Activated naive CD4-positive, alpha-beta T cell treated with anti-CD3 and anti-CD28 coated beads, Interleukin-2, amount 10 ng/mL, durations not matched to agents 7 days and 5 days (primary cell): ENCODE measurements at regions of chr16 and their contacts with region 1.

Region 1: DNA sequence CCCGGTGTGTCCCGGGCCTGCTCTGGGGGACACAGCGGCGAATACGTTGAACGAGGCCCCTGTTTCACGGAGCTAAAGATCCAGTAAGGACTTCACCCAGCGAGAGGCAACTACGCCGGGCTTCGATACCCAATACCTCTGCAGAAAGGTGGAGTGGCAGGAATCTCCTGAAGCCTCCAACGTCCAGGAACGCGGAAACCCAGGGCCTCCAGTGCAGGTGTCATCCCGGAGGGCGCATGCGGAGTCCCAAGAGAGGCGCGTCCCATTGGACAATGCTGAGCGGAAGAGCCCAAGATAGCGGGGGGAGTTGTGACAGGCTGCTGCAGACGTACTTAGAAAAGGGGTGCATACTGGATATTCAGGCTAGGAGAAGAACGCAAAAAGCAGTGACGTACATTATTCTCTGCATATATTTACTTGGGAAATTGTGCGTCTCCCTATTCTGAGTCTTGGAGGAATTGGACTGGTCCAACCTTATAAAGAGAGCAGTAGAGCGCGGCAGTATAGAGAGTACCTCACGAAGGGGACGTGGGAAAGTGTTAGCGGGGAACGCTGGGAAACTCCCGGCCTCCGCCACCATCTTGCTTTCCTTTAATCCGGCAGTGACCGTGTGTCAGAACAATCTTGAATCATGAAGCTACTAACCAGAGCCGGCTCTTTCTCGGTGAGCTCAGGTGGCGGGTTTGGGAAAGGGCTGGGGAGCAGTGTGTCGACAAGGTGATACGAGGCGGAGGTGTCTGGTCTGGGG is at the start of gene UQCRC2:
- DNase-seq: peak; percentile 91
- H3K4me3 Mint-ChIP-seq: peak within 1 kb of the TSS; percentile 99
- H3K27ac Mint-ChIP-seq: peak within 1 kb of the TSS; percentile 97
- H3K4me1 Mint-ChIP-seq: peaks cover 67% of the 10 kb centered on the region
- H3K27me3 Mint-ChIP-seq: no peaks in the 10 kb centered on the region

Region 2: GRCh38 chr16:21940570-21940969 is 12.4 kb before region 1 on chr16:
- CTCF ChIA-PET with region 1: interaction called, 13 read pairs
- DNase-seq: no peak
- H3K4me3 Mint-ChIP-seq: no peak overlapping the region
- H3K27ac Mint-ChIP-seq: no peak overlapping the region
- H3K4me1 Mint-ChIP-seq: peaks cover 8% of the 10 kb centered on the region
- H3K27me3 Mint-ChIP-seq: no peaks in the 10 kb centered on the region

Region 3: DNA sequence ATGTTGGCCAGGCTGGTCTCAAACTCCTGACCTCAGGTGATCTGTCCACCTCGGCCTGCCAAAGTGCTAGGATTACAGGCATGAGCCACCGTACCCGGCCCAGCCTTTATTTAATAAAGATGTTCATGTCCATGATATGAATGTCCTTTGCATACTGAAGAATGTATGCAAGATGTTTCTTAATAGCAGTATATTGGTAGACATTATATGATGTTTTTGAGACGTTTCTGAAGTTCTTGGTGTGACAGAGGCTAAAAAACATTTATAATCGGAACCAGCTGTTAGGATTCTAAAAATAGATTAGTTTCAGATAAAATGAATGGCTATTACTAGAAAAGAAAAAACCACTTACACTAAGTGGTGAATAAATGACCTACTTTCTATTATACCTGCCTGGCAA is 36.2 kb after region 1 on chr16:
- CTCF ChIA-PET with region 1: no interaction called
- DNase-seq: no peak
- H3K4me3 Mint-ChIP-seq: no peak overlapping the region
- H3K27ac Mint-ChIP-seq: no peak overlapping the region
- H3K4me1 Mint-ChIP-seq: peaks cover 8% of the 10 kb centered on the region
- H3K27me3 Mint-ChIP-seq: no peaks in the 10 kb centered on the region